ENCODE measurements at regions of chr17 and their contacts with region 1.

Region 1: GRCh38 chr17:58082870-58083490 is at the start of gene DYNLL2:
- DNase-seq: peak; percentile 76
- ATAC-seq: peak; percentile 85
- H3K4me3 ChIP-seq: peak within 1 kb of the TSS; percentile 85 to 87
- H3K27ac ChIP-seq: peak within 1 kb of the TSS; percentile 78
- H3K4me1 ChIP-seq: peaks cover 11 to 19% of the 10 kb centered on the region in 2 experiments
- H3K27me3 ChIP-seq: peaks cover under 1% of the 10 kb centered on the region; the same call in 1 of the 2 replicates
- CTCF ChIP-seq: no peak
- POLR2A ChIP-seq: peak; percentile 71
- RAD21 ChIP-seq: no peak
- total RNA-seq, gene DYNLL2: 54.9 TPM

Region 2: DNA sequence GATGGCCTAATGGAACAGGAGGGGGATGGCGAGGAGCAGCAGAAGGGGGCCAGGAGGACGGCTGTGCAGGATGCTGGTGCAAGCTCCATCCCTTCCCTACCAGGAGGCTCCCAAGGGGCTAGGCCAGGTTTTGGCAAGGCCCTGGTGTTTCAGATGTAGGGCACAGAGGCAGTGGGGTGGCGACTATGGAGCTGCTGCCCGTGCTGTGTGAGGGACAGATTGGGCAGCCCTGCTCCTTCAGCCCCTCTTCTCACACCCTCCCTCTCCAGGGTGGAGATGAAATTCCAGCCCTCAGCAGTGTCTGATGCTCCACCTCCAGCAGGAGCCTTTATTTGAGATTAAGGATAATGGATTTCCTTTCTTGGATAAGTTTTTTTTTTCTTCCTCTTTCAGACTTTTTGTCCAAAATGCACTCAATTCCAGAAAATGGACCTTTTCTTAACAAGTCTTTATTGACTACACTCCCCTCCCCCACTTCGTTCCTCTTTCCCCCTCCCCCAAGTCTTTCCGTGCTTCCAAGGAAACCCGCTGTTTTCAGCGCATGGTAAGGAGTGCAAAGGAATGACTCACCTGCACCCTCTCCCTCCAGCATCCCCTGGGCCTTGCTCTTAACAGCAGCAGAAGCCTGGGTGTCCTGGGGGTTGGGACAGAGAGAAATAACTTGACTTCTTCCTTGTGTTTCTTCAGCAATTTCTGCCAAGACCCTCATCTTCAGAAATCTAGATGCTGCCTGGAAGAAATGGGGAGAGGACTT is 433.1 kb before region 1 on chr17:
- CTCF ChIA-PET with region 1: no interaction called
- POLR2A ChIA-PET with region 1: no interaction called
- RAD21 ChIA-PET with region 1: no interaction called
- intact Hi-C with region 1: no loop called
- DNase-seq: no peak
- ATAC-seq: peak; percentile 63
- H3K4me3 ChIP-seq: no peak overlapping the region
- H3K27ac ChIP-seq: no peak overlapping the region
- H3K4me1 ChIP-seq: peaks cover 3 to 15% of the 10 kb centered on the region in 2 experiments; a peak in 3 of 4 replicates
- H3K27me3 ChIP-seq: no peaks in the 10 kb centered on the region
- CTCF ChIP-seq: no peak
- POLR2A ChIP-seq: no peak
- RAD21 ChIP-seq: no peak

Region 3: GRCh38 chr17:58006924-58007780 is 75.8 kb before region 1 on chr17 and contains the start of gene SRSF1:
- CTCF ChIA-PET with region 1: no interaction called
- POLR2A ChIA-PET with region 1: interaction called, 28 read pairs
- RAD21 ChIA-PET with region 1: interaction called in 1 of 2 experiments, 8 read pairs
- intact Hi-C with region 1: loop called (anchors 1 kb)
- DNase-seq: peak; percentile 99
- ATAC-seq: peak; percentile 86
- H3K4me3 ChIP-seq: peak within 1 kb of the TSS; percentile 88 to 94
- H3K27ac ChIP-seq: peak within 1 kb of the TSS; percentile 100
- H3K4me1 ChIP-seq: peaks cover 24 to 41% of the 10 kb centered on the region in 2 experiments
- H3K27me3 ChIP-seq: no peaks in the 10 kb centered on the region
- CTCF ChIP-seq: no peak
- POLR2A ChIP-seq: peak; percentile 85
- RAD21 ChIP-seq: no peak
- total RNA-seq, gene SRSF1: 434 TPM

Region 4: DNA sequence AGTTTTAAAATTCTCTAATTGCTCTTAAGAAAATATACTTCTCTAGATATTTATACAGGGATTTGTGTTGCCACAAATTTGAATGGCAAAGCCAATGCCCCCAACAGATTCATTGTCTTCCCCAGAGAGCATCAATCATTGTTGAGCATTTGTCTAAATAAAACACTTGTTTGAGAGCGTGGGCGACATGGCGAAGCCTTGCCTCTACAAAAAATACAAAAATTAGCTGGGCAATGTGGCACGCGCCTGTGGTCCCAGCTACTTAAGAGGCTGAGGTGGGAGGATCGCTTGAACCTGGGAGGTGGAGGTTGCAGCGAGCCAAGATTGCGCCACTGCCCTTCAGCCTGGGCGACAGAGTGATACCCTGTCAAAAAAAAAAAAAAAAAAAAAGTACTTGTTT is 62.6 kb before region 1 on chr17:
- CTCF ChIA-PET with region 1: no interaction called
- POLR2A ChIA-PET with region 1: interaction called, 10 read pairs
- RAD21 ChIA-PET with region 1: no interaction called
- intact Hi-C with region 1: loop called (anchors 5 kb)
- DNase-seq: no peak
- ATAC-seq: no peak
- H3K4me3 ChIP-seq: no peak overlapping the region
- H3K27ac ChIP-seq: no peak overlapping the region
- H3K4me1 ChIP-seq: peaks cover 24 to 30% of the 10 kb centered on the region in 2 experiments
- H3K27me3 ChIP-seq: no peaks in the 10 kb centered on the region
- CTCF ChIP-seq: no peak
- POLR2A ChIP-seq: no peak
- RAD21 ChIP-seq: no peak

Region 5: GRCh38 chr17:58056251-58056875 is 26.6 kb before region 1 on chr17:
- CTCF ChIA-PET with region 1: no interaction called
- POLR2A ChIA-PET with region 1: interaction called, 12 read pairs
- RAD21 ChIA-PET with region 1: no interaction called
- intact Hi-C with region 1: no loop called
- DNase-seq: no peak
- ATAC-seq: no peak
- H3K4me3 ChIP-seq: no peak overlapping the region
- H3K27ac ChIP-seq: no peak overlapping the region
- H3K4me1 ChIP-seq: no peaks in the 10 kb centered on the region; a peak in 1 of 4 replicates
- H3K27me3 ChIP-seq: no peaks in the 10 kb centered on the region; the same call in 1 of the 2 replicates
- CTCF ChIP-seq: no peak
- POLR2A ChIP-seq: no peak
- RAD21 ChIP-seq: no peak

Region 6: DNA sequence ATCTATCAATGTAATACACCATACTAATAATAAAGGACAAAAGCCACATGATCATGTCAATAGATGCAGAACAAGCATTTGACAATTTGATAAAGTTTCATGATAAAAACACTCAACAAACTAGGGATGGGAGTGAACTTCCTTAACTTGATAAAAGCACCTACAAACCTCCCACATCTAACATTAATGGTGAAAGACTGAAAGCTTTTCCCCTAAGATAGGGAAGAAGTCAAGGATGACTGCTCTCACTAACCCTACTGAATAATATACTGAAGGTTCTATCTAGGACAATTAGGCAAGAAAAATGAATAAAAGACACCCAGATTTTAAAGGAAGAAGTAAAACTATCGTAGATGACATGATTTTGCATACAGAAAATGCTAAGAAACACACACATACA is 10.1 kb before region 1 on chr17:
- CTCF ChIA-PET with region 1: no interaction called
- POLR2A ChIA-PET with region 1: interaction called, 11 read pairs
- RAD21 ChIA-PET with region 1: no interaction called
- intact Hi-C with region 1: no loop called
- DNase-seq: no peak
- ATAC-seq: no peak
- H3K4me3 ChIP-seq: no peak overlapping the region
- H3K27ac ChIP-seq: no peak overlapping the region
- H3K4me1 ChIP-seq: no peaks in the 10 kb centered on the region
- H3K27me3 ChIP-seq: peaks cover 32% of the 10 kb centered on the region
- CTCF ChIP-seq: no peak
- POLR2A ChIP-seq: no peak
- RAD21 ChIP-seq: no peak

Region 7: GRCh38 chr17:58096892-58097291 is 13.9 kb after region 1 on chr17:
- CTCF ChIA-PET with region 1: interaction called, 3 read pairs
- POLR2A ChIA-PET with region 1: interaction called, 11 read pairs
- RAD21 ChIA-PET with region 1: no interaction called
- intact Hi-C with region 1: no loop called
- DNase-seq: no peak
- ATAC-seq: peak; percentile 70
- H3K4me3 ChIP-seq: no peak overlapping the region
- H3K27ac ChIP-seq: no peak overlapping the region
- H3K4me1 ChIP-seq: no peaks in the 10 kb centered on the region; a peak in 1 of 4 replicates
- H3K27me3 ChIP-seq: no peaks in the 10 kb centered on the region
- CTCF ChIP-seq: peak in 2 of 3 experiments; percentile 30 to 49; a peak in 2 of 6 replicates
- POLR2A ChIP-seq: no peak
- RAD21 ChIP-seq: no peak

Measured in HCT116 (cell line).